AG04449 (cell line): ENCODE measurements at regions of chr11 and their contacts with region 1.

Region 1: DNA sequence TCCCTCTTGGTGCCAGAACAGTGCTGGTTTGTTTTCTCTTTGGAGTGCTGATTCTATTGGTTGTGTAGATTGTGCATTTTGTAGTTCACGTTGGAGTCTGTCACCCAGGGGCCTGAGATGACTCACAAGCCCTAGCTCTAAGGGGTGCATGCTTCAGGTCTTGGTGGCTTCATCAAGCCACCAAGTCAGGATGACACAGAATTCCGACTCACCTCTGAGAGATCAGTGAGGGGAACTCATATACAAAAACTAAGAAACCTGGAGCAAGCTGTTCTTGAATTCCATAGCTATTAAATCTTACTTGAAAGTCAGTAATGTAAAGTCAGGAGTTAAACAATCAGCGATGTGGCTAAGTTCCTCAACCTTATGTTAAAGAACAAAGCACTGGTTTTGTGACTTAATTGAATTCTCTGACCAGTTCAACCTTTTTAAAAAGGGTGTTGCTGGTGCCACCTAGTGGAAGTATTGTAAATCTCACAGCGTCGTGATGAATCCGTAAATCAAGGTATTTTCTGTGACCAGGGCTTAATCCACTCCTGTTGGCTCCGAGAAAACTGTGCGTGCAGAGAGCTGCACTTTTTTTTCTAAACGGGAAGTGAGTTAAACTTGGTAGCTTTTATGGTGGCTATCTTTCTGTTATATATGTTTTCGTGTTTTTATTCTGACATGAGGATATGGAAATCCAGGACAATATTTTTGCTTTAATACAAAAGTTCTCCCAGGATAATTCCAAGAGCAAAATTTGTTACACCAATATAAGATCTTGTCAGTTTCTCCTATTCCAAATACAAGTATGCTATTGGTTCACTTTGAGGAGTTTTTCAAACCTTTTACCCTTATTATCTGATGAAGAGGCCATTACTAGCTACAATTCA is 14.6 kb downstream of the MMP13 start:
- DNase-seq: no peak
- H3K4me3 ChIP-seq: no peak overlapping the region
- CTCF ChIP-seq: peak; percentile 52

Region 2: DNA sequence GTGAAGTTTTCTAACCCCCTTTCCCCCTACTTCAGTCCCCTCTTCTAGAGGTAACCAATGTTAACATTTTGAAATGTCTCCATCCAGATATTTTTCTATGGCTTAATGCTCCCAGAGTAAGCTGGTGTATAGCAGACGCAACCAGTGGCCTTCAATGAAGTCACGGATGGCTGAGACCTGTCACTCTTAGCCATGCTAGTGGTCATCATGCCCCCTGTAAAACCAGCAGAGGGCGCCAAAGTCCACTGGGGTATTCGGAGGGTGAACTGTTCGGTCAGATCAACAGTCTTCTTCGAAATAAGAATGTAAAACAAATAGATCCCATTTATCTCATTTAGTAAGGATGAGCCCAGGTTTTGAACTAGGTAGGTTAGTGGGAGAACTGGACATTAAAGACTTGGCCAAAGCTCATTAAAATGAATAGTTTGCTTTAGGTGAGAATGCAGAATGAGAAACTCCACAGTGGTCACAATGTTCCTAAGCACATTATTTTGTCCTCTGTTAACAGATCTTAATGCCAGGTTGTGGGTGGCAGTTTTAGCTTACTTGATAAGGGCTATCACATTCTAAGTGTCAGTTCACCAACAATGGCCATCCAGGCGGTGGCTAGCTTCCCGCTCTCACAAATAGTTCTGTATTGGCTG is 207.6 kb before region 1 on chr11:
- CTCF ChIA-PET with region 1: interaction called, 74 read pairs
- POLR2A ChIA-PET with region 1: no interaction called
- DNase-seq: no peak
- H3K4me3 ChIP-seq: no peak overlapping the region
- CTCF ChIP-seq: peak; percentile 74

Region 3: GRCh38 chr11:102802341-102802740 is 138.6 kb before region 1 on chr11:
- CTCF ChIA-PET with region 1: interaction called, 12 read pairs
- POLR2A ChIA-PET with region 1: no interaction called
- DNase-seq: peak; percentile 91
- H3K4me3 ChIP-seq: no peak overlapping the region
- CTCF ChIP-seq: no peak

Region 4: DNA sequence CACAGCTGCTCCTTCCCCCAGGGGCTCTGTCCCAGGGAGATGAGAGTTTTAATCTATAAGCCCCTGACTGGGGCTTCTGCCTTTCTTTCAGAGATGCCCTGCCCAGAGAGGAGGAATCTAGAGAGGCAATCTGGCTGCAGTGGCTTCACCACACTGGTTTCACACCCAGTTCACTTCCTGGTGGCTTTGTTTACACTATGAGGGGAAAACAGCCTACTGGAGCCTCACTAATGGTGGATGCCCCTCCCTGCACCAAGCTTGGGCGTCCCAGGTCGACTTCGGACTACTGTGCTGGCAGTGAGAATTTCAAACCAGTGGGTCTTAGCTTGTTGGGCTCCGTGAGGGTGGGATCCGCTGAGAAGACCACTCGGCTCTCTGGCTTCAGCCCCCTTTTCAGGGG is 121.5 kb before region 1 on chr11:
- CTCF ChIA-PET with region 1: interaction called, 11 read pairs
- POLR2A ChIA-PET with region 1: no interaction called
- DNase-seq: no peak
- H3K4me3 ChIP-seq: no peak overlapping the region
- CTCF ChIP-seq: no peak

Region 5: DNA sequence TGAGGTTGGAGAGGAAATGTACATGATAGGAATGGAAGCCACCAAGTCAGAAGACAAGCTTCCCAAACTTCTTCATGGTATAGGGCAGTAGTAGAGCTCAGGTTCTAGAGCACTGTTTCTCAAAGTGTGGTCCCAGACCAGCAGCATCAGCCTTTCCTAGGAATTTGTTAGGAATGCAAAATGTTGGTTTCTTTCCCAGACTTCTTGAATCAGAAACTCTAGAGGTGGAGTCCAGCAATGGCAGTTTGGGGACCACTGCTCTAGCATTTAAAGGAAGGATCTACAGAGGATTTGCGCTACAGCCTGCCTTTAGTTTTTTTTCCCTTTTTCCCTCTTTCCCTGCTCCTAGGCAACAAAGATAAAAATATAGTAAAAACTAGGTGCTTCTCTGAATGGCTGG is 49.2 kb before region 1 on chr11:
- CTCF ChIA-PET with region 1: interaction called, 14 read pairs
- POLR2A ChIA-PET with region 1: no interaction called
- DNase-seq: no peak
- H3K4me3 ChIP-seq: no peak overlapping the region
- CTCF ChIP-seq: no peak

Region 6: GRCh38 chr11:102920118-102920684 is 20.8 kb before region 1 on chr11:
- CTCF ChIA-PET with region 1: interaction called, 102 read pairs
- POLR2A ChIA-PET with region 1: no interaction called
- DNase-seq: no peak
- H3K4me3 ChIP-seq: no peak overlapping the region
- CTCF ChIP-seq: no peak

Region 7: DNA sequence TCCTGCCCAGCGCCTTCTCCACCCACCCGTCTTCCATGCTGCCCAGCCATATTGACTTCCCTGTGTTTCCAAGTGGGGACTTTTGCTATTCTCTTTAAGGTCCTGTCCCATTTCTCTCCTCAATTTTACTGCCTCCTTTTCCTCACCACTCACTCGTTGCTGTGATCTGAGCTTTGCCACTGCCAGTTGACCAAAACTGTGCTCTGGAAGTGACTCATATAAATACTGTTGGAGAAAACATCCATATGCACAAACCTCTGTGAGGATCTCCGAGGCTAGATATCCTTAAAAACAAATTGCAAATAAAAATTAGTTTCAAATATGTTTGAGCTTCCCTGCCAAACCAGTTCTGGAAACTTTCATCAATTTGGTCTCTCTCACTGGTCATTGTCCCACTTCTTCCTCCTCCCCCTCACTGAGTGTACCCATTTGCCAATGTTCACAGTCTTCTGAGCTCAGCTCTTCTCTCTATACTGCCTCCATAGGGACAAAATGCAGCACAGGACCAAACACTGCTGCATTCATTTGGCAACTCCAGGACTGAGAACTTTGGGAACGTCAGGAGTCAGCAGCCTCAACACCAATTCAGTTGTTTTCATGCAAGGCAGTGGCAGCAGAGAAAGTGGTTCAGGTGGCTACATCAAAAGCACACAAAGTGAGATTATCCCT is 48.6 kb after region 1 on chr11:
- CTCF ChIA-PET with region 1: interaction called, 10 read pairs
- POLR2A ChIA-PET with region 1: no interaction called
- DNase-seq: no peak
- H3K4me3 ChIP-seq: no peak overlapping the region
- CTCF ChIP-seq: no peak

Region 8: GRCh38 chr11:103091064-103091800 is 150.3 kb after region 1 on chr11:
- CTCF ChIA-PET with region 1: no interaction called
- POLR2A ChIA-PET with region 1: no interaction called
- DNase-seq: no peak
- H3K4me3 ChIP-seq: peak overlapping the region; percentile 81
- CTCF ChIP-seq: no peak

Region 9: DNA sequence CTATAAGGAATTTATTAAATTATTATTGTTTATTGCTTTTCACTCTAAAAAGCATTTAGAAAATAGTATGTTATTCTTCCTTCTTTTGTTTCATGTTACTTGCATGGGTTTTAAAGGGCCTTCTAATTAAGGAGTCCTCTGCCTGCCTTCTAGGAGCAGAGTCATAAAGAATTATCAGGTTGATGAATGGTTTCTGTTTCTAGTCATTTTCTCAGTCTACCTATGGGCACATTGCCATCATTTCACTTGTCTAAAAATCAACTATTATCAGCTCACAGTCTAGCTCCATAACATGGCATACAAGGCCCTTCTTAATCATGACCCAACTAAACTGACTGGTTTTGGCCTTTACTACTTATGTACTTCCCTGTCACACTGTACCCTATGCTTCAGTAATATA is 184.5 kb after region 1 on chr11:
- CTCF ChIA-PET with region 1: no interaction called
- POLR2A ChIA-PET with region 1: no interaction called
- DNase-seq: no peak
- H3K4me3 ChIP-seq: no peak overlapping the region
- CTCF ChIP-seq: no peak

Region 10: DNA sequence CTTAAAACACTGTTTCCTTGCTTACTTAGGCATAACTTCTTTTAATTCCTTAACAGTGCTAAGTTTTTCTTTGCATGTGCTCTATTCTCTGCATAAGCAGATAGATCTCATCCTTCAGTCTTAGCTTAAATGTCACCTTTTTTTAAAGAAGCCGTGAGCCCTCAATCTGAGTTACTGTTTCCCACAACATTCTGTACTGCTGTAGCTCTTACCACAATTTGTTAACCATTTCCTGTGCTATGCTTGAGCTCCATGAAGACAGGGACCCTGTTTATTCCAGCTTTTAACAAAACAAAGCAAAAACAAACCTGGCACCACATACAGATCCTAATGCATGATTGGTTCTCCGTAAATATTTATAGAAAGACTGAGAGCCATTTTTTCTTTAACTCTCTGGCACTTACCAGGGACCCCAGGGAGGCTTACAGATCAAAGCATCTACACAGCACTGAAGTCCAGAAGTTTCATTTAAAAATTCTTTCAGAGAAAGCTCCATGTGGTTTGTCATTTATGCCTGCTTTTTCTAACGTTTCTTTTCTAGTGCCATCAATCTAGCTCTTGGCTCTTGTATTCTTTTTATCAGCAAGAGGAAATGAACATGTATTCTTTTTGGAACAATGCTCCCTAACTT is 243.1 kb after region 1 on chr11:
- CTCF ChIA-PET with region 1: no interaction called
- POLR2A ChIA-PET with region 1: no interaction called
- DNase-seq: no peak
- H3K4me3 ChIP-seq: no peak overlapping the region
- CTCF ChIP-seq: no peak

Region 11: DNA sequence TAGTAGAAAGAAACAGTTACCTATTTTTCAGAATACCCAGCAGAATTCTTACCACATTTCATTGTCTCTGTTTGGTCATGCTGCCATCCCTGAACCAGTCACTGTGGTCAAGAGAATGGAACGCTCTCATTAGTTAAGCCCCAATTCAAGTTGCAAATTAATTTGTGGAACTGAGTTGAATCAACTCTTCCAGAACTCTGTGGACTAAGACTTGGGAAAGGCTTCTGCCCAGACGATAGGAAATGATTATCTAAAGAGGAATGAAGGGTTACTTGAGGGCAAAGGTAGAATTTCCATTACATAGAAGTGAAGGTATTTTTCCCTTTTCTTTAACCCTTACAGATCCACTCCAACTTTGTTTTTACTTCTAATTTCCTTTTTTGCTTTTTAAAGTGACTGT is 454.7 kb after region 1 on chr11:
- CTCF ChIA-PET with region 1: no interaction called
- POLR2A ChIA-PET with region 1: no interaction called
- DNase-seq: peak; percentile 50
- H3K4me3 ChIP-seq: no peak overlapping the region
- CTCF ChIP-seq: no peak